ENCODE measurements at regions of chr2 and their contacts with region 1.

Region 1: DNA sequence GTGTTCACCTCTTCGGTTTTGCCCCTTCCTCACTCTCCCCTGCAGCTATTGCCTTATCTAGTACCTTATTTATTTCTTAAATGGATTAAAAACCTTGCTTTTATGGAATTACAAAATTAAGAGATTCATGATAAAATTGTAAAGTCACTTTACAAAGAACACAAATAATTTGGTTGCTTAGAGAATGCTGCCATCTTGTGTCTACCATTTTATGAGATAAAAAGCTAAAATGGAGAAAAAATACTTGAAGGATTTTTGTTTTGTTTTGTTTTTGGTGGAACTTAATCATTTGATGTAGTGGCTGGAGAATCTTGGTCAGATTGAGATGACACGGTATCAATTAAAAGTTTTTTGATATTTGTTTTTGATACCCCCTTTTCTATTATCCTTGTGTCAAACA is 69.6 kb downstream of the R3HDM1 start:
- DNase-seq: no peak
- ATAC-seq: no peak
- H3K4me3 Mint-ChIP-seq: no peak overlapping the region
- H3K27ac Mint-ChIP-seq: no peak overlapping the region
- H3K4me1 Mint-ChIP-seq: no peaks in the 10 kb centered on the region
- H3K27me3 Mint-ChIP-seq: no peaks in the 10 kb centered on the region
- CTCF ChIP-seq: no peak

Region 2: GRCh38 chr2:135451966-135452365 is 148.9 kb before region 1 on chr2:
- CTCF ChIA-PET with region 1: no interaction called
- POLR2A ChIA-PET with region 1: no interaction called
- intact Hi-C with region 1: no loop called
- DNase-seq: no peak
- ATAC-seq: no peak
- H3K4me3 Mint-ChIP-seq: no peak overlapping the region
- H3K27ac Mint-ChIP-seq: no peak overlapping the region
- H3K4me1 Mint-ChIP-seq: no peaks in the 10 kb centered on the region
- H3K27me3 Mint-ChIP-seq: no peaks in the 10 kb centered on the region
- CTCF ChIP-seq: no peak

Region 3: DNA sequence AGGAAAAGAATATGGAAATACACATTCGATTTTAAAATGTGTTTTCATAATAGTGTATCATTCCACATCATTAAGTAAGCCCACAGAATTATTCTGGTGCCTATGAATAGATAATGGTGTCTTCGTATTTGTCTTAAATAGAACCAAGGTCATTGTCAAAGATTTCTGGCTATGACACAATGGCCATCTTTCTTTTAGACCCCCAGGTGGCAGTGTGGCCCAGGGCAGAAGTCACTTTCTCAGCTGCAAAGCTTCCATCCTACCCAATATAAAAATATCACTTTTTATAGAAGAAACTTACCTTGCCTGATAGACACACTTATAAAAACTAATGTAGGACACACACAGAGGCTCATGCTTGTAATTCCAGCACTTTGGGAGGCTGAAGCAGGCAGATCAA is 127.3 kb before region 1 on chr2:
- CTCF ChIA-PET with region 1: interaction called, 8 read pairs
- POLR2A ChIA-PET with region 1: no interaction called
- intact Hi-C with region 1: loop called (anchors 2 kb)
- DNase-seq: no peak
- ATAC-seq: no peak
- H3K4me3 Mint-ChIP-seq: no peak overlapping the region
- H3K27ac Mint-ChIP-seq: no peak overlapping the region
- H3K4me1 Mint-ChIP-seq: no peaks in the 10 kb centered on the region
- H3K27me3 Mint-ChIP-seq: no peaks in the 10 kb centered on the region
- CTCF ChIP-seq: no peak

Measured in activated B cell treated with CpG ODN at 0.5 μM for 24 hours (primary cell).